MCF 10A (cell line): ENCODE measurements at regions of chr6 and their contacts with region 1.

Region 1: DNA sequence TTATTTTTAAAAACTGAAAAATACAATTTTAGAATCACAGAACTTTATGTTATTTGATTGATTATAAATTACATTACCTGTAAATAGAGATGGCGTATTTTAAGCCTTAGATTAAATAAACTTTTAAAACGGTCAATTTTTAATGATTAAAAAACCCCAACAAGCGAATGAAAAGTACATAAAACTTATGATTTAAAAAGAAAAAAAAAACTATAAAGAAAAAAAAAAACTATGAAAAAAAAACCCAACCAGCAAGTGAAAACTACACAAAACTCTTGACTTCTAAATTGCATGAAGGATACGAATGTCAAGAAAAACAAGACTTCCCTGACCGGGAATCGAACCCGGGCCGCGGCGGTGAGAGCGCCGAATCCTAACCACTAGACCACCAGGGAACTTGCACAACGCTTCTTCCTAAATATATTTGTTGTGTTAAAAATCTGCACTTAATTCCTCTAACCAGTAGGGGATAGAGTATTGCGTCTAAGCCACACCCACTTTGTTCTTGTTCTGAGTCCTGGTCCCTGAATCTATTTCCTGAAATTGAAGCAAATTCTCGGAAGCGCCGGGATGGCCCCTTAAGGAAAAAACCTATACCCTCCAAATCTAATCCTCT is 10.7 kb upstream of the NCOA7 start:
- DNase-seq: peak; percentile 94
- H3K4me3 Mint-ChIP-seq: no peak overlapping the region
- H3K27ac Mint-ChIP-seq: no peak overlapping the region
- H3K4me1 Mint-ChIP-seq: peaks cover 14% of the 10 kb centered on the region
- H3K27me3 Mint-ChIP-seq: peaks cover 14% of the 10 kb centered on the region
- CTCF ChIP-seq: no peak

Region 2: GRCh38 chr6:124961777-124962611 is 818.0 kb before region 1 on chr6 and contains the start of gene RNF217:
- CTCF ChIA-PET with region 1: no interaction called
- POLR2A ChIA-PET with region 1: interaction called, 15 read pairs
- intact Hi-C with region 1: loop called (anchors 2 kb)
- DNase-seq: peak; percentile 49
- H3K4me3 Mint-ChIP-seq: peak within 1 kb of the TSS; percentile 81
- H3K27ac Mint-ChIP-seq: peak within 1 kb of the TSS; percentile 86
- H3K4me1 Mint-ChIP-seq: peaks cover 37% of the 10 kb centered on the region
- H3K27me3 Mint-ChIP-seq: no peaks in the 10 kb centered on the region
- CTCF ChIP-seq: no peak
- total RNA-seq, gene RNF217: 22.8 and 24.8 TPM in 2 replicates

Region 3: DNA sequence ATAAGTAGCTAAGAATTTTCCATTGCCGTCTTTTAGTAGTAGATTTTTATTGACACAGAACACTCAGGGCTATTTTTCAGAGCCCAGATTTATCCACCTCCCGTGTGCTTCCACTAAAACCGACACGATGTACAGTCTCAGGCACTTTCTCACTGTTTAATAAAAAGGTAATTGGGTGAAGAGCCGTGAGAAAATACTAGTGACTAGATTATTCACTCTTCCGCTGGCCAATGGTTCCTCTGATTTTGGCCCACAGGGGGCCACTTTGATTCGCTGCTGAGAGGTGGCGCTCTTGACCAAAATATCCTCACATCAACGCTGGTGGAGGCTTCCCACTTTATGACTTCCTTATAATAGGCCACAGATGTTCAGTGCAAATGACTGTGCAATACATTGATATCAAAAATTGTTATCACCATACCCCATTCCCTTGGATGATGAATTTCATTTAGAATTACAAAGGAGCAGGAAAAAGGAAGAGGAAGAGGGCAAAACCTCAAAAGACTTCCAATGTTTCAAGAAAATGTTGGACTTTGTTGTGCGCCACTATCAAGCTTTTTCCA is 465.9 kb before region 1 on chr6:
- CTCF ChIA-PET with region 1: interaction called, 11 read pairs
- POLR2A ChIA-PET with region 1: interaction called, 3 read pairs
- intact Hi-C with region 1: no loop called
- DNase-seq: peak; percentile 73
- H3K4me3 Mint-ChIP-seq: no peak overlapping the region
- H3K27ac Mint-ChIP-seq: no peak overlapping the region
- H3K4me1 Mint-ChIP-seq: no peaks in the 10 kb centered on the region
- H3K27me3 Mint-ChIP-seq: peaks cover 12% of the 10 kb centered on the region
- CTCF ChIP-seq: peak; percentile 79

Region 4: GRCh38 chr6:125546841-125547251 is 233.2 kb before region 1 on chr6:
- CTCF ChIA-PET with region 1: no interaction called
- POLR2A ChIA-PET with region 1: no interaction called
- intact Hi-C with region 1: no loop called
- DNase-seq: peak; percentile 22
- H3K4me3 Mint-ChIP-seq: no peak overlapping the region
- H3K27ac Mint-ChIP-seq: no peak overlapping the region
- H3K4me1 Mint-ChIP-seq: no peaks in the 10 kb centered on the region
- H3K27me3 Mint-ChIP-seq: peaks cover 91% of the 10 kb centered on the region
- CTCF ChIP-seq: no peak

Region 5: DNA sequence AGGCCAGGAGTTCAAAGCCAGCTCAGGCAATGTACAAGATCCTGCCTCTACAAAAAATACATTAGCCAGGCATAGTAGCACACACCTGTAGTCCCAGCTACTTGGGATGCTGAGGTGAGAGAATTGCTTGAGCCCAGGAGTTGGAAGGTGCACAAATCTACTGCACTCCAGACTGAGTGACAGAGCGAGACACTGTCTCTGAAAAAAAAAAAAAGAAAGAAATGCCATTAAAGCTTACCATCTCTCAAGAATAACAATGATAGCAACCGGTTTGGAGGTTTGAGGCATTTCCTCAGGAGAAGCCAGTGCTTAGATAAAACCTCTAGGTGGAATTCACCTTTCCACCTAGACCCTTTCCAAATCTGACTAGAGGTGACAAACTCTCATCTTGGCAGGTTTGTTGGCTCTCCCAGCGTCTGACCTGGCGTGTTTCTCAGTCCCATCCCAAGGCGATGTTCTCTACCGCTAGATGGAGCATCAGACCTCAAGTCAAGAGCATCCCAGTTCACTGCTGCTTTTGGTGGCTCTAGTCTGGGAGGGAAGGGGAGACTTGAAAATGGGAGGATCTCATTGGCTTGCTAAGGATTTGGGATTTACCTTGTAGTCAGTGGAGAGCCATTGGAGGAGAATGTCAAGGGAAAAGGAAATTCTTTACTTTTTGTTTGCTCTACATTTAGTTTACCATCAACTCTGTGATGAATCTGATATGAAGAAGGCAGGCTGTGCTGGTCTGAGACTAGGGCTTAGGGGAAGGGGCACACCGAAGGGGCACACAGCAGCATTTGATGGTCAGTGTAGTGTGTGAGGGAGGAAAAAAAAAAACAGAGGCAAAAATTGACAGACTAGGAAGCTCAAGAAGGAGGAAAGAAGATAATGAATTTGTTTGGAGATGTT is 78.6 kb after region 1 on chr6:
- CTCF ChIA-PET with region 1: interaction called, 20 read pairs
- POLR2A ChIA-PET with region 1: interaction called, 6 read pairs
- intact Hi-C with region 1: no loop called
- DNase-seq: peak; percentile 86
- H3K4me3 Mint-ChIP-seq: no peak overlapping the region
- H3K27ac Mint-ChIP-seq: peak overlapping the region; percentile 49
- H3K4me1 Mint-ChIP-seq: peaks cover 25% of the 10 kb centered on the region
- H3K27me3 Mint-ChIP-seq: no peaks in the 10 kb centered on the region
- CTCF ChIP-seq: peak; percentile 61

Region 6: DNA sequence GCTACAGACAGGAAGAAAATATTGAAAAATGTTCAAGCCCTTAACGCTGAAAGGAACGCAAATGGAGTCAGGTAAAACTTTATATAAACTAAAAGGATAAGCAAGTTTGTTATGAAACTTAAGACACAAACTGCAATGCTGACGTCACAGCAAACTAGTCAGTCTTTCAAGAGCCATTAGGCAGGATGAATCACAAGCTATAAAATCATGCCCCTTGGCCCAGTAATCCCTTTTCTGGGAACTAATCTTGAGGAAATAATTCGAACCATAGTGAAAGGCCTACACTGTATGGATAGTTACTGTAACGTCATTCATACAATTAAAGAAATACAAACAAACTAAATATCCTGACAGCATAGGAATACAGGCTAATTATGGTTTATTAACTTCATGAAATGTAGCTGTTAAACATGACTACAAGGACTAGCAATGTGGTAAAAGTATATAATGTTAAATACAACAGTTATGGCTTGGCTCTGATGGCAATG is 133.9 kb after region 1 on chr6:
- CTCF ChIA-PET with region 1: no interaction called
- POLR2A ChIA-PET with region 1: interaction called, 17 read pairs
- intact Hi-C with region 1: loop called (anchors 5 kb)
- DNase-seq: peak; percentile 97
- H3K4me3 Mint-ChIP-seq: no peak overlapping the region
- H3K27ac Mint-ChIP-seq: peak overlapping the region; percentile 94
- H3K4me1 Mint-ChIP-seq: peaks cover 46% of the 10 kb centered on the region
- H3K27me3 Mint-ChIP-seq: no peaks in the 10 kb centered on the region
- CTCF ChIP-seq: no peak

Region 7: GRCh38 chr6:125974214-125974866 is 194.3 kb after region 1 on chr6:
- CTCF ChIA-PET with region 1: interaction called, 15 read pairs
- POLR2A ChIA-PET with region 1: interaction called, 15 read pairs
- intact Hi-C with region 1: loop called (anchors 5 kb)
- DNase-seq: peak; percentile 66
- H3K4me3 Mint-ChIP-seq: no peak overlapping the region
- H3K27ac Mint-ChIP-seq: no peak overlapping the region
- H3K4me1 Mint-ChIP-seq: peaks cover 5% of the 10 kb centered on the region
- H3K27me3 Mint-ChIP-seq: no peaks in the 10 kb centered on the region
- CTCF ChIP-seq: peak; percentile 44